Mammary epithelial cell (primary cell): ENCODE measurements at regions of chr18 and their contacts with region 1.

Region 1: DNA sequence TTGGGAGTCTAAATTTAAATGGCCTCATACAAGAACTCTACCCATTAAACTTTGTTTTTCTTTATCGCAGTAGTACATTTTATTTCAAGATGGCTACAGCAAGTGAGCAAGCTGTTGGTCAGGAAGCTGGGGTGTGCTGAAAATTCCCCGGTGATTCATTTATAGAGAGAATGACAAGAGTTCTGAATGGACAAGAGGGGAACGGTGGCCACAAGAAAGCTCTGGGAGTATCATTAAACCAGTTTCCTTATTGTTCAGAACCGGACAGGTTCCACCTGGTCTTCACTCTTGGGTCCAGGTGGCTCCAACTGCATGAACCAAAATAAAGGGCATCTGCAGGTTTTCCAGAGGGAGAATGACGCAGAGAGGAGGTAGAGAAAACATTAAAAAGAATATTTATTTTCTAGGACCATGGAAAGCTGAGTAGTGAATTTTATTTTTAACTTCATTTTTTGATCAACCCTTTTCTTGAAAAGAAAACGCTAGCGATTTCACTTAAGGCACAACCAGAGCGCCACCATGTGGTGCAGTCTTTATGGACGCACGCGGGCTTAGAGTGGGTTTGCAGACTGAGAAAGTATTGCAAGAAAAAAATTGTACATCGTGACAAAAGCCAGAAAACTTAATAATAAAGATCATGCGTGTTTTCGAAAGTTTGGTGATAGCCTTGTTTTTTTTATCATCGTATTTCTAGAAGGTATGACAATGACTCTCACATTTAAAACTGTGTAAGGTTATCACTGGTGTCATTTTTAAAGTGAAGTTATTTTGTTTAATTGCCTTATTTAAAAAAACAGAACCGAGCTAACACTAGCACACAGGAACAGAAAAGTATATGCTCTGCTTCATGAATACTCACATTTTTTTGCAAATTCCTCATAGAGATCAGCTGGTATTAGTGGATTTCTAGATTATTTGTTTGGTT is 97.9 kb upstream of the NOL4 start:
- DNase-seq: peak; percentile 21
- H3K4me3 ChIP-seq: no peak overlapping the region
- H3K27ac ChIP-seq: no peak overlapping the region
- H3K4me1 ChIP-seq: no peaks in the 10 kb centered on the region
- H3K27me3 ChIP-seq: no peaks in the 10 kb centered on the region
- CTCF ChIP-seq: peak; percentile 68 to 82

Region 2: GRCh38 chr18:33264566-33264965 is 1058.1 kb before region 1 on chr18:
- CTCF ChIA-PET with region 1: no interaction called
- dilution Hi-C with region 1: no loop called
- in situ Hi-C with region 1: no loop called
- intact Hi-C with region 1: no loop called
- DNase-seq: no peak
- H3K4me3 ChIP-seq: no peak overlapping the region
- H3K27ac ChIP-seq: no peak overlapping the region
- H3K4me1 ChIP-seq: no peaks in the 10 kb centered on the region
- H3K27me3 ChIP-seq: no peaks in the 10 kb centered on the region
- CTCF ChIP-seq: no peak

Region 3: GRCh38 chr18:33751613-33752221 is 570.9 kb before region 1 on chr18:
- CTCF ChIA-PET with region 1: no interaction called
- dilution Hi-C with region 1: no loop called
- in situ Hi-C with region 1: no loop called
- intact Hi-C with region 1: loop called (anchors 1 kb)
- DNase-seq: no peak
- H3K4me3 ChIP-seq: no peak overlapping the region
- H3K27ac ChIP-seq: no peak overlapping the region
- H3K4me1 ChIP-seq: peaks cover 9% of the 10 kb centered on the region
- H3K27me3 ChIP-seq: no peaks in the 10 kb centered on the region
- CTCF ChIP-seq: peak; percentile 55 to 60

Region 4: GRCh38 chr18:33839441-33840211 is 483.0 kb before region 1 on chr18:
- CTCF ChIA-PET with region 1: no interaction called
- dilution Hi-C with region 1: no loop called
- in situ Hi-C with region 1: no loop called
- intact Hi-C with region 1: loop called (anchors 1 kb)
- DNase-seq: peak; percentile 39
- H3K4me3 ChIP-seq: no peak overlapping the region
- H3K27ac ChIP-seq: no peak overlapping the region
- H3K4me1 ChIP-seq: no peaks in the 10 kb centered on the region
- H3K27me3 ChIP-seq: no peaks in the 10 kb centered on the region
- CTCF ChIP-seq: peak; percentile 85 to 86

Region 5: DNA sequence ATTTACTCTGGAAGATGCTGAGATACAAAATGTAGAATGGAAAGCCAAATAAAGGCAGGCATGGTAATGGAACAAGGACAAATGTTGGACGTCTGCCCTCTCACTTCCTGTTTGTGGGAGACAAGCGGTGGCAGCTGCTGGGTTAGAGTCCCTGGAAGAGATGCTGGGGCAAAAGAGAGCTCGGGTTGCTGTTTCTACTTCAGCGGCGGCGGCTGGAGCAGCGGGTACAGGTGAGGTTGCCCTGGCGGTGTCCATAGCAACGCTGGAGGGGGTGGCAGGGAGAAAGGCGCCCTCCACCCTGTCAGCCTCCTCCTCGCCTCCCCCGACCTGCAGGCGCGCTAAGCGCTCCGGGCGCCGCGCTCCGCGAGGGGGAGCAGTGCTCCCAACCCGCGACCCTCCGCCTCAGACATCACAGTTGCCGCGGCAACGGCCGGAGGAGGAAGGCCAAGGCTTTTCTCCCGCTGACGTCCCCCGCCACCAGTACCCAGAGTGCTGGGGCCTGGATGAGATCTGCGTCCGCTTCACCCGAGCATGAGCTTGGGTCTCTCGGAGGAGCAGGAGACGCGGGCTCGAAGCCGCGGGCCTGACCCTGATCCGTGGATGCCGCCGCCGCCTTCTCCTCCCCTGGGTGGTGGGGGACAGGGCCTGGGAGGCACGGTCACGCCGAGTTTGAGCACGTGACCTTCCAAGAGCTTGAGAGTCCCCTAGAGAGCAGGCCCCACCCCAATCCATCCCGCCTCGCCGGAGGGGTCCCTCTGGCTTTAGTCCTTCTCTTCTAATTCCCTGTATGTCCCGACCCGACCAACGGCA is 163.5 kb before region 1 on chr18:
- CTCF ChIA-PET with region 1: no interaction called
- dilution Hi-C with region 1: no loop called
- in situ Hi-C with region 1: no loop called
- intact Hi-C with region 1: no loop called
- DNase-seq: no peak
- H3K4me3 ChIP-seq: no peak overlapping the region
- H3K27ac ChIP-seq: no peak overlapping the region
- H3K4me1 ChIP-seq: no peaks in the 10 kb centered on the region
- H3K27me3 ChIP-seq: peaks cover 6% of the 10 kb centered on the region
- CTCF ChIP-seq: no peak

Region 6: GRCh38 chr18:34224423-34225217 is 98.0 kb before region 1 on chr18 and contains the start of gene NOL4:
- CTCF ChIA-PET with region 1: no interaction called
- dilution Hi-C with region 1: no loop called
- in situ Hi-C with region 1: no loop called
- intact Hi-C with region 1: loop called (anchors 5 kb)
- DNase-seq: peak; percentile 39
- H3K4me3 ChIP-seq: peak within 1 kb of the TSS; percentile 11 to 45 (median 15)
- H3K27ac ChIP-seq: no peak within 1 kb of the TSS
- H3K4me1 ChIP-seq: peaks cover 27% of the 10 kb centered on the region
- H3K27me3 ChIP-seq: peaks cover 47% of the 10 kb centered on the region
- CTCF ChIP-seq: peak; percentile 33 to 70
- total RNA-seq, gene NOL4: 0.33 TPM in 1 of 2 donors, not detected in the other